Dorsolateral prefrontal cortex (tissue), 120 donors: ENCODE measurements at regions of chr9 and their contacts with region 1.

Region 1: GRCh38 chr9:136124976-136125692 is 6.5 kb upstream of the TMEM250 start:
- DNase-seq: no peak
- H3K4me3 ChIP-seq: no peak overlapping the region
- H3K27ac ChIP-seq: no peak overlapping the region
- H3K27me3 ChIP-seq: no peaks in the 10 kb centered on the region
- CTCF ChIP-seq: no peak

Region 2: GRCh38 chr9:135864447-135865049 is 260.6 kb before region 1 on chr9:
- intact Hi-C with region 1: loop called in 1 of 2 experiments (anchors 2 kb)
- DNase-seq: peak in 9 of 10 donors; percentile 59 to 80 (median 74)
- H3K4me3 ChIP-seq: no peak overlapping the region
- H3K27ac ChIP-seq: peak overlapping the region in 12 of 59 donors; percentile 5 to 61 (median 26)
- H3K27me3 ChIP-seq: no peaks in the 10 kb centered on the region
- CTCF ChIP-seq: peak; percentile 75 to 94 (median 89)

Region 3: DNA sequence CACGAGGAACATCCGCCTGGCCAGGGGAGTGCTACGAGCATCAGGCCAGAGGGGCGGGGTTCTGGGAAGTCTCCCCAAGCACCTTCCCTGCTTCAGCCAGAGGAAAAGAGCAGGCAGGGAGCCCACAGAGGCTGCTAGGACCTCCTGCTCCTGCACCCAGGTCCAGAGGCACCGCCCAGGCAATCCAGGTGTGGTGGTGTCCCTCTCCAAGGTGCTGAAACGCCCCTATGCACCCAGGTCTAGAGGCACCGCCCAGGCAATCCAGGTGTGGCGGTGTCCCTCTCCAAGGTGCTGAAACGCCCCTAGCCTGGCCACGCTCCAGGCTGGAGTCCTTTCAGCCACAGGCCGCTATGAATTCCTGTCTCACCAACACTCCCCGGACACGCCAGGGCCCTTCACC is 153.2 kb before region 1 on chr9:
- intact Hi-C with region 1: loop called (anchors 1 to 2 kb)
- DNase-seq: no peak
- H3K4me3 ChIP-seq: no peak overlapping the region
- H3K27ac ChIP-seq: no peak overlapping the region
- H3K27me3 ChIP-seq: no peaks in the 10 kb centered on the region
- CTCF ChIP-seq: no peak